Uterus (tissue), 4 donors: ENCODE measurements at regions of chr20 and their contacts with region 1.

Region 1: DNA sequence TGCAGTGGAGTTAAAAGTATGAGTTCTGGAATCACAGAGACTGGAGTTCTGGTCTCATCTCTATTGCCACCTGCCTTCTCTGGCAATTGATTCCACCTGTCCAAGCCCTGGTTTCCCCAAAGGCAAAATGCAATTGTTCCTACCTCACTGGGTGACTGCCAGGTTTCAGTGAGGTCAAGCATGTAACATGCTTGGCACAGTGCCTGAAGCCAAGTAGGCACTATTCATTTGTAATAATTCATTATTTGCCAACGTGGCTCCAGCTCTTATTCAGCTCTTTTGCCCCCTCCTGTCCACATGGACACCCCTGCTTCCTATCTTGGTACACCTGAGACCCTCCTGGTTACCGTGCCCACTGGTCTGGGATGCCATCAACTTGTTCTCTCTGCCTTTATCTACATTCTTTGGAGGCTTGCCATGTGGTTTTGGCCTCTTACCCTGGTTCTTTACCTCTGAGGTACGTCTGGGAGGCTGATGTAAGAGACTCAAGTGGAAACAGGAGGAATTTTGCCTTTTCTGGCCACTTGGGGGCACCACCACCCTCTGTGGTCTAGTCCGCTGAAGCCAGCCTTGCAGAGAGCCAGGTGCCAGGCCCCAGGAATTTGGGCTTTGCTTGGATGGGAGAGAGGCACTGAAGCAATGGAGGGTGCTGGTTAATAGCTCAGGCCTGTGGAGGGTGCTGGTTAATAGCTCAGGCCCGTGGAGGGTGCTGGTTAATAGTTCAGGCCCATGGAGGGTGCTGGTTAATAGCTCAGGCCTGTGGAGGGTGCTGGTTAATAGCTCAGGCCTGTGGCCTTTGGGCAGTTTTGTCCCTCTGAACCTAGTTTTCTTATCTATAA is 1.7 kb downstream of the KCNK15 start:
- DNase-seq: peak; percentile 70 to 75
- H3K4me3 ChIP-seq: no peak overlapping the region
- H3K27ac ChIP-seq: no peak overlapping the region
- H3K4me1 ChIP-seq: no peaks in the 10 kb centered on the region
- H3K27me3 ChIP-seq: no peaks in the 10 kb centered on the region
- CTCF ChIP-seq: peak; percentile 60 to 65 (median 64)
- POLR2A ChIP-seq: no peak

Region 2: GRCh38 chr20:44412402-44413144 is 334.8 kb before region 1 on chr20:
- intact Hi-C with region 1: no loop called
- DNase-seq: no peak
- H3K4me3 ChIP-seq: no peak overlapping the region
- H3K27ac ChIP-seq: no peak overlapping the region
- H3K4me1 ChIP-seq: no peaks in the 10 kb centered on the region
- H3K27me3 ChIP-seq: no peaks in the 10 kb centered on the region
- CTCF ChIP-seq: no peak
- POLR2A ChIP-seq: no peak

Region 3: DNA sequence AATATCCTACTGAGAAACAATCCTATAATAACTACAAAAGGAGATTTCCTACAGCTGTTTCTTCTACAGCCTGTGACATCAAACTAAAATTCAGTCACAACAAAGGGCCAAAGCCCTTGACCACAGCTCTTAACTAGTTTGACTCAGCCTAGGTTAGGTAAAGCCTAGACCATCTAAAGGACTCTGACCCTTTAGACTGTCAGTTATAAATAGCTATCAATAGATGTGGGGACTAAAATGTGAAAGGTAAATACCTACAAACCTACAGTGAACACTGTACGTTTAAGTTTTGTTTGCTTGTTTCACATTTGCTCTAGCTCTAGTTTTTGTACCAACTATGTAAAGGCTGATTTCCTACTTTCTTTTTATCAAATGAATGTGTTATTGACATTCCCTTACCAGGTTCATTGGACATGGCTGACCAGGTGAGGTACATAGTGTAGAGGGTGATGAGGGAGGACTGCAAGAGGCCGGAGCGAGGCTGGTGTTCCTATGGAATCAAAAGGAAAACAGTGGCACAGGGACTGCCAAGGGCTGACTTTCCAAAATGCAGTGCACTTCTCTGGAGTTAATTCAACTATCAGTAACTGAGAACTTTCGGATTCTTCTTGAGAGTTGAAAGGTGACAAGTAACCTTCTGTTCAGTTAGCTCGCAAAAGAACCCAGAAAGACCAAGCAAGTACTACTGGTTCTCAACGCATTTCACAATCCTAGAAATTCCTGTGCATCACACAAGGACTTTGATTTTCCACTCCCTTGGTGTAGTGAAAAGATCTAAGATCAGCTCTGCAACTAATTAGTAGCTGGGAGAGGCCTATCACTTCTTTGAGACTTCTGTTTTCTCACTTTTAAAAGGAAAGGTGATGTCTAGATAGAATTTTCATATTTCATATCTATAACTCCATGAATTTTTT is 242.7 kb before region 1 on chr20:
- intact Hi-C with region 1: no loop called
- DNase-seq: no peak
- H3K4me3 ChIP-seq: no peak overlapping the region
- H3K27ac ChIP-seq: no peak overlapping the region
- H3K4me1 ChIP-seq: no peaks in the 10 kb centered on the region
- H3K27me3 ChIP-seq: no peaks in the 10 kb centered on the region
- CTCF ChIP-seq: no peak
- POLR2A ChIP-seq: no peak

Region 4: GRCh38 chr20:44861531-44862006 is 114.2 kb after region 1 on chr20:
- intact Hi-C with region 1: loop called (anchors 10 kb)
- DNase-seq: peak; percentile 51 to 53
- H3K4me3 ChIP-seq: no peak overlapping the region
- H3K27ac ChIP-seq: peak overlapping the region; percentile 60 to 76
- H3K4me1 ChIP-seq: peaks cover 5 to 17% of the 10 kb centered on the region in 2 donors
- H3K27me3 ChIP-seq: no peaks in the 10 kb centered on the region
- CTCF ChIP-seq: no peak
- POLR2A ChIP-seq: no peak